ENCODE measurements at regions of chr1 and their contacts with region 1.

Region 1: DNA sequence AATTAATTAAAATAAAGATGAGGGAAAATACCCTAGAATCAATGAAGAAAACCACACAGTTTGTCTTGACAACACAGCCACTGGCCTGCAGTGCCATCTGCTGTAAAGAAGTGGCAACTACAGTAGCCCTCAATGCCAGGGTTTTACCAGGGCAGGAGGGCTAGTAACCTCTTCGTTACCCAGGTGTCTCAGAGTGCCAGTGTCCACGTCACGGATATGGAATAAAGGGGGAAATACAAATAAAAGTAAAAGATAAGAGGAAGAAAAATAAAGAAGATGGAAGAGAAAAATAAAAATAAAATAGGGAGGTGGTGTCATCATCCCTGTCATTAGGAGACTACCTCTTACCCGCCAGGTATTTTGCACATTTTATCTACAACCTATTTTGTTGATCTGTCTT is 14.2 kb upstream of the SLC44A3 start:
- DNase-seq: peak in 11 of 14 experiments; percentile 17 to 67 (median 35)
- ATAC-seq: peak; percentile 77
- H3K4me3 ChIP-seq: no peak overlapping the region
- H3K4me3 Mint-ChIP-seq: no peak overlapping the region
- H3K27ac ChIP-seq: no peak overlapping the region
- H3K27ac Mint-ChIP-seq: no peak overlapping the region
- H3K4me1 ChIP-seq: peaks cover 5% of the 10 kb centered on the region
- H3K4me1 Mint-ChIP-seq: peaks cover 6% of the 10 kb centered on the region
- H3K27me3 ChIP-seq: peaks cover 2 to 7% of the 10 kb centered on the region in 2 experiments
- H3K27me3 Mint-ChIP-seq: peaks cover 4% of the 10 kb centered on the region
- CTCF ChIP-seq: peak; percentile 99

Region 2: DNA sequence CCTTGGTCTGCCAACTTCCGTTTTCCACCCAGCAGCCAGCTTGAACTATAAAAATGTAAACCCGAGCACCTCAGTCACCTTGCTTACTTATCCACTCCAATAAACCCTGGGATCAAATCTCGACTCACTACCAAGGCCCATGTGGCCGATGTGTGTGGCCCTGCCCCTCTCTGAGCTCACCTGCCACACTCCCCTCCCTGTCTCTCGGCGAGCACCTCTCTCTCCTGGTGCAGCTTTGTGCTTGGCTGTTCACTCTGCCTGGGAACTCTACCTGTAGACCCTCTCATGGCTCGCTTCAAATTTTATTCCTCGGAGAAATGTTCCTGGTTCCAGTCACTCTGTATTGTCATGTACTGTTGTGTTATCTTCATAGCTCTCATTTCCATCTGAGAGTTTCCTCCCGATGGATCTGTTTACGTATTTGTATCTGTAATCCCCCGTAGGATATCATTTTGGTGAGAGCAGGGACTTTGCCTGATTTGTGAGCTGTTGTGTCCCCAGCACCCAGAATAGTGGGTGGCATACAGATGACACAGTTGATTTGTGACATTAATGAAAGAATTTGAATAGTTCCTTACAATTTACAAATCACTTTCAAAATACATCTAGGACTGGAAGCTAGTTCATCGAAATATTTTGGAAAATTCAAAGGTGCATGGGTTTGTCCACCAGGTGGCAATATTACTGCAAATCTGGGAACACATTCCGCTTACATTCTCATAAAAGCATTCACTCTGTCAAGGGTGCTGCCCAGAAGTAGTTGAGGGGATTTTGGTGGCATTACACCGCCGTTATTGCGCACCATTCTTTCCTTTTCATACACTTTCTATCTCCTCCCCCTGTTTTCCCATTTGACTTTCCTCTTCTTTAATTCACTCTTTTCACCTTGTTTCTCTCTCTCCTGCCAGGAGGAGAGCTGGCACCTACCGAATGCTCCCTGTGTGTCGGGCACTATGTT is 780.2 kb before region 1 on chr1:
- CTCF ChIA-PET with region 1: no interaction called
- POLR2A ChIA-PET with region 1: no interaction called
- intact Hi-C with region 1: loop called in 1 of 2 experiments (anchors 5 kb)
- DNase-seq: peak in 3 of 14 experiments; percentile 20 to 31 (median 22)
- ATAC-seq: no peak
- H3K4me3 ChIP-seq: no peak overlapping the region
- H3K4me3 Mint-ChIP-seq: no peak overlapping the region
- H3K27ac ChIP-seq: no peak overlapping the region
- H3K27ac Mint-ChIP-seq: no peak overlapping the region
- H3K4me1 ChIP-seq: no peaks in the 10 kb centered on the region
- H3K4me1 Mint-ChIP-seq: no peaks in the 10 kb centered on the region
- H3K27me3 ChIP-seq: no peaks in the 10 kb centered on the region
- H3K27me3 Mint-ChIP-seq: peaks cover 9% of the 10 kb centered on the region
- CTCF ChIP-seq: peak; percentile 54

Region 3: DNA sequence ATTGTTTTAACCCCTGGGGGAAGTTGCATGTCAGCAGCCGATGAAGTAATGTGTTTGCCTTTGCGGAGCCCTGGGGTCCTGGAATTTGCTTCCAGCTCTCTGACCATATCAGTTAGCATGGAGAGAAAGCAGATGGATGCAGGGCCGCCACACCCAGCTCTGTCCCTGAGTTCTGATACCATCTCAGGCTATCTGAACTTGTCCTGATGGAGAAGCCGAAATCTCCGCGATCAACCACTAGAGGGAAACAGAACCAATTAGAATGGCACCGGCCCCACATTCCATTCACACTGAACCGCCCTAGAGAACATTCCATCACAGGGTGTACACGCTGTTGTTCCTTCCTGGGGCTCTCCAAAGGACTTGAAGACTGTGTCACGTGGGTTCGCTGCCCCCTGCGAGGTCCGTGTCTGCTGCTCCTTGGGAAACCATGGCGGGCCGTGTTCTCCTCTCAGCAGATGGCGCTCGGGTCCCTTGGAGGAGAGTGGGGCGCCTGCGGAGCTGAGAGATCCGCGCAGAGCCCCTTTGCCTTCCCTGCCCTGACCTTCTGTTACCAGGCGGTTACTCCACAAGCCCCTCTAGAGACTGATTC is 760.4 kb before region 1 on chr1:
- CTCF ChIA-PET with region 1: no interaction called
- POLR2A ChIA-PET with region 1: no interaction called
- intact Hi-C with region 1: loop called (anchors 5 kb)
- DNase-seq: peak in 8 of 14 experiments; percentile 2 to 36 (median 18)
- ATAC-seq: peak; percentile 44
- H3K4me3 ChIP-seq: peak overlapping the region; percentile 12
- H3K4me3 Mint-ChIP-seq: peak overlapping the region; percentile 38
- H3K27ac ChIP-seq: no peak overlapping the region
- H3K27ac Mint-ChIP-seq: no peak overlapping the region
- H3K4me1 ChIP-seq: peaks cover 6% of the 10 kb centered on the region
- H3K4me1 Mint-ChIP-seq: no peaks in the 10 kb centered on the region
- H3K27me3 ChIP-seq: peaks cover 4 to 6% of the 10 kb centered on the region in 2 experiments
- H3K27me3 Mint-ChIP-seq: peaks cover 31% of the 10 kb centered on the region
- CTCF ChIP-seq: peak; percentile 55

Region 4: GRCh38 chr1:94061513-94062443 is 744.1 kb before region 1 on chr1:
- CTCF ChIA-PET with region 1: interaction called, 4 read pairs
- POLR2A ChIA-PET with region 1: no interaction called
- intact Hi-C with region 1: loop called in 1 of 2 experiments (anchors 5 kb)
- DNase-seq: peak in 5 of 14 experiments; percentile 1 to 52 (median 15)
- ATAC-seq: peak; percentile 70
- H3K4me3 ChIP-seq: no peak overlapping the region
- H3K4me3 Mint-ChIP-seq: no peak overlapping the region
- H3K27ac ChIP-seq: no peak overlapping the region
- H3K27ac Mint-ChIP-seq: no peak overlapping the region
- H3K4me1 ChIP-seq: no peaks in the 10 kb centered on the region
- H3K4me1 Mint-ChIP-seq: no peaks in the 10 kb centered on the region
- H3K27me3 ChIP-seq: peaks cover 0 to 6% of the 10 kb centered on the region in 2 experiments
- H3K27me3 Mint-ChIP-seq: peaks cover 38% of the 10 kb centered on the region
- CTCF ChIP-seq: peak; percentile 42

Region 5: DNA sequence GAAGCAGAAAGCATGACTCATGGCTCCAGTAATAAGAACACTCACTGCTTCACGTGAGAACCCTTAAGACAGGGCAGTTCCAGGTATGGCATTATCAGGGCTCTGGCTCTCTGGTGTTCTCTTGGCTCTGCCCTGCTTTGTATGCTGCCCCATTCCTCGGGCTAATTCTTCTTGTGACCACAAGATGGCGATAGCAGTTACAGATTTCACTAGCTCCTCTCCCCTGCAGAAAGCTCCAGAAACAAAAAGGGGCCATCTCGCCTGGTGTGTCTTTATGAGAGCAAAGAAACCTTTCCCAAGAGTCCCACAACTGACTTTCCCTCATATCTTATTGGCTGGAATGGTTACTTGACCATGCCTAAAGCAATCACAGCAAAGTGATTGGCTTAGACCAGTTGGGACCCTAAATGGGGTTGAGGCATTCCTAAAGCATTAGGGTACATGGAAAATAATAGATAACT is 324.4 kb before region 1 on chr1:
- CTCF ChIA-PET with region 1: interaction called, 3 read pairs
- POLR2A ChIA-PET with region 1: no interaction called
- intact Hi-C with region 1: loop called (anchors 1 to 2 kb)
- DNase-seq: peak in 12 of 14 experiments; percentile 0 to 73 (median 12)
- ATAC-seq: peak; percentile 75
- H3K4me3 ChIP-seq: no peak overlapping the region
- H3K4me3 Mint-ChIP-seq: no peak overlapping the region
- H3K27ac ChIP-seq: no peak overlapping the region
- H3K27ac Mint-ChIP-seq: no peak overlapping the region
- H3K4me1 ChIP-seq: no peaks in the 10 kb centered on the region
- H3K4me1 Mint-ChIP-seq: no peaks in the 10 kb centered on the region
- H3K27me3 ChIP-seq: no peaks in the 10 kb centered on the region
- H3K27me3 Mint-ChIP-seq: no peaks in the 10 kb centered on the region
- CTCF ChIP-seq: peak; percentile 79

Region 6: GRCh38 chr1:94602316-94602715 is 203.6 kb before region 1 on chr1:
- CTCF ChIA-PET with region 1: no interaction called
- POLR2A ChIA-PET with region 1: no interaction called
- intact Hi-C with region 1: no loop called
- DNase-seq: peak in 3 of 14 experiments; percentile 58 to 66 (median 62)
- ATAC-seq: peak; percentile 41
- H3K4me3 ChIP-seq: peak overlapping the region; percentile 6
- H3K4me3 Mint-ChIP-seq: peak overlapping the region; percentile 26
- H3K27ac ChIP-seq: no peak overlapping the region
- H3K27ac Mint-ChIP-seq: no peak overlapping the region
- H3K4me1 ChIP-seq: peaks cover 7% of the 10 kb centered on the region
- H3K4me1 Mint-ChIP-seq: peaks cover 4% of the 10 kb centered on the region
- H3K27me3 ChIP-seq: no peaks in the 10 kb centered on the region
- H3K27me3 Mint-ChIP-seq: peaks cover 10% of the 10 kb centered on the region
- CTCF ChIP-seq: no peak

Region 7: DNA sequence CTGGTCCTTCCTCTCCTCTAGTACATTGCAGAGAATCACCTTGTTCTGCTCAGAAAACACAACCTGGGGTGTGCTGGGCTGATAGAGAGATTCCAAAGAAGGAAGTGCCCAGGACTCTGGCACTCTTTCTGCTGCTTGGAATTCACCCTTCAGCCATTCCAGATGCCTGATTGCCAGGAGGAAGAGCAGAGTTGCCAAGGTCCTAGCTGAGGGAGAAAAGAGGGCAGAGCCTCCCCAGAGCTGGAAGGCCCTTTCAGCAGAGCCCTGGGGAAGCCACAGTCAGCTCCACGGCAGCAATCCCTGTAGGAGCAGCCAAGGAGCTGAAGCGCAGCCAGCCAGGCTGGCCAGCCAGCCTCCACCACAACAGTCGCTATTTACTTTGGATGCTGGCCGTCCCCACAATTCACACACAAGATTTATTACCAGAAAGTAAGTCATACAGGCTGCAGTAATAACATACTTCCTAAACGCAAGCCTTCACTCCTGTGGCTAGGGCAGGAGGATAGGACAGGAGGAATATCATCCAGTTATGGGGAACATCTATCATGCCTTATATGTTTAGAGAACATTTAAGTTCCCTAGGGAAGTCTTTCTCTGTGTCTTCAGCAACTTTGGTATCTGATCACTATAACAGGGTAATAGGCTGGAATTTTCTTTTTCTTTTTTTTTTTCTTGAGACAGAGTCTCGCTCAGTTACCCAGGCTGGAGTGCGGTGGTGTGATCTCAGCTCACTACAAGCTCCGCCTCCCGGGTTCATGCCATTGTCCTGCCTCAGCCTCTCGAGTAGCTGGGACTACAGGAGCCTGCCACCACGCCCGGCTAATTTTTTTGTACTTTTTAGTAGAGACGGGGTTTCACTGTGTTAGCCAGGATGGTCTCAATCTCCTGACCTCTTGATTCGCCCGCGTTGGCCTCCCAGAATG is 22.3 kb before region 1 on chr1:
- CTCF ChIA-PET with region 1: no interaction called
- POLR2A ChIA-PET with region 1: no interaction called
- intact Hi-C with region 1: no loop called
- DNase-seq: no peak
- ATAC-seq: no peak
- H3K4me3 ChIP-seq: no peak overlapping the region
- H3K4me3 Mint-ChIP-seq: no peak overlapping the region
- H3K27ac ChIP-seq: no peak overlapping the region
- H3K27ac Mint-ChIP-seq: no peak overlapping the region
- H3K4me1 ChIP-seq: no peaks in the 10 kb centered on the region
- H3K4me1 Mint-ChIP-seq: no peaks in the 10 kb centered on the region
- H3K27me3 ChIP-seq: peaks cover 0 to 7% of the 10 kb centered on the region in 2 experiments
- H3K27me3 Mint-ChIP-seq: peaks cover 25% of the 10 kb centered on the region
- CTCF ChIP-seq: no peak